Esophagus squamous epithelium (tissue), 5 donors: ENCODE measurements at regions of chr17 and their contacts with region 1.

Region 1: GRCh38 chr17:21511363-21512198 is 135.4 kb downstream of the KCNJ12 start:
- DNase-seq: no peak
- H3K4me3 ChIP-seq: peak overlapping the region; percentile 27 to 64 (median 56)
- H3K27ac ChIP-seq: peak overlapping the region in 3 of 4 donors; percentile 63 to 72 (median 67)
- H3K4me1 ChIP-seq: peaks cover 5 to 21% (median 6%) of the 10 kb centered on the region in 3 donors
- H3K27me3 ChIP-seq: peaks cover 0 to 26% (median 0%) of the 10 kb centered on the region in 4 donors
- CTCF ChIP-seq: peak; percentile 48 to 84 (median 74)
- POLR2A ChIP-seq: no peak

Region 2: GRCh38 chr17:21126645-21127510 is 384.7 kb before region 1 on chr17 and contains the start of gene DHRS7B:
- intact Hi-C with region 1: loop called (anchors 10 kb)
- DNase-seq: peak; percentile 56
- H3K4me3 ChIP-seq: peak within 1 kb of the TSS; percentile 62 to 98 (median 73)
- H3K27ac ChIP-seq: peak within 1 kb of the TSS; percentile 90 to 98 (median 96)
- H3K4me1 ChIP-seq: peaks cover 8 to 49% (median 13%) of the 10 kb centered on the region in 3 donors
- H3K27me3 ChIP-seq: peaks cover 0 to 3% (median 0%) of the 10 kb centered on the region in 4 donors
- CTCF ChIP-seq: peak in 1 of 6 experiments; percentile 6
- POLR2A ChIP-seq: peak in 2 of 4 donors; percentile 69 to 75
- total RNA-seq, gene DHRS7B: 18.8 to 32.4 (median 22.3) TPM

Region 3: DNA sequence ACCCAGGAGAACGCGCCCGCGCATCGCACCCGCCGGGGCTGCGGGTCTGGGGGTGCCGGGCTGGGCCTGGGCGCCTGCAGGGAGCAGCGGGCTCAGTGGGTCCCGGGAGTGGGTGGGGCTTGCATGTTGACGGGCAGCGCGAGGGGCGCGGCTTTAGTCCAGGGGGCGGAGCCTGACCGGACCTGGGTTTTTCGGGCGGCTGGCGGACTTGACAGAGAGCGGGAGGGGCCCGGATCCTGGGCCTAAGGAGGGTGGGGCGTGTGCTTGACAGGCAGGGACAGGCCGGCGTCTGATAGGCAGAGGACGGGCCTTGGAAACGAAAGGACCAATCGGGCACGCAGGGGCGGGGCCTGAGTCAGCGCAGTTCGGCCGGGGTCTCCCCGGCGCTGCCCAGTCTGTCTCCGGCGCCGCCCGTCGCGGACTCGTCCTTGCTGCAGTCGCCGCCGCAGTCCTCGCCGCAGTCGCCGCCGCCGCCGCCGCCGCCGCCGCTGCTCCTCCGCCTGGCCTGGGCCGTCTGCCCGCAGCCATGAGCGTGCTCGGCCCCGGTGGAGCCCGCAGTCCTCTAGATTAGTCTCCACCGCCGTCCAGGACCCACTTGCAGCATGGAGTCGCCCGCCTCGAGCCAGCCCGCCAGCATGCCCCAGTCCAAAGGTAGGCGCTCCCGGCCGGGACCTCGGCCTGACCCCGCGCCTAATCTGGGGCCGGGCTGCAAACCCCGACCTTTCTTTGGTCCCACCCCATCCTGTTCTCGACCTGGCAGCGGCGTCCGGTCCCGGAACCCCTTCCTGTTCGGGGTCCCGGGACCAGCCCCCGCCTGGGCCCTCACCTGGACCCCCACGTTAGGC is 227.0 kb before region 1 on chr17 and contains the start of gene MAP2K3:
- intact Hi-C with region 1: loop called (anchors 5 kb)
- DNase-seq: peak; percentile 98
- H3K4me3 ChIP-seq: peak within 1 kb of the TSS; percentile 65 to 97 (median 88)
- H3K27ac ChIP-seq: peak within 1 kb of the TSS; percentile 90 to 99 (median 97)
- H3K4me1 ChIP-seq: peaks cover 42 to 79% (median 46%) of the 10 kb centered on the region in 3 donors
- H3K27me3 ChIP-seq: no peaks in the 10 kb centered on the region
- CTCF ChIP-seq: peak in 1 of 6 experiments; percentile 11
- POLR2A ChIP-seq: peak in 3 of 4 donors; percentile 64 to 97 (median 93)
- total RNA-seq, gene MAP2K3: 24.1 to 53.6 (median 38.4) TPM

Region 4: GRCh38 chr17:21457051-21458026 is 54.2 kb before region 1 on chr17:
- intact Hi-C with region 1: loop called (anchors 5 kb)
- DNase-seq: peak; percentile 24
- H3K4me3 ChIP-seq: no peak overlapping the region
- H3K27ac ChIP-seq: peak overlapping the region in 2 of 4 donors; percentile 19 to 65
- H3K4me1 ChIP-seq: peaks cover 5 to 21% (median 15%) of the 10 kb centered on the region in 3 donors
- H3K27me3 ChIP-seq: peaks cover 0 to 27% (median 0%) of the 10 kb centered on the region in 4 donors
- CTCF ChIP-seq: peak; percentile 68 to 93 (median 89)
- POLR2A ChIP-seq: no peak

Region 5: DNA sequence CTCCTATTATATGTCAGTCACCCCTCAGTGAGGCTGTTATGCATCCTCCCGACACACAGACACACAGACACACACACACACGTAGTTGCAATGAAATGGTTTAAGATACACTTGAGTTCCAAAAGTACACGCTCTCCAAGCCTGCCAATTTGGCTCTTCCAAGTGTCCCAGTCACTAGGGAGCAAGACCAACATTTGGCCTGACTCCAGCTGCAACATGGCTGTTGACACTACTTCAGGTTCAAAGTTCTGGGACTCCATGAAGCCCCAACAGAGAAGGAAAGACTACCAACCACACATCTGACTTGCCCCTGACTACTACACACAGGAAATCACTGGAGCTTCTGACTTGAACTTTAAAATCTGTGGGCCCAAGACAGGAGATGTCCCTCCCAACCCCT is 52.7 kb after region 1 on chr17:
- intact Hi-C with region 1: no loop called
- DNase-seq: no peak
- H3K4me3 ChIP-seq: no peak overlapping the region
- H3K27ac ChIP-seq: no peak overlapping the region
- H3K4me1 ChIP-seq: no peaks in the 10 kb centered on the region
- H3K27me3 ChIP-seq: peaks cover 0 to 3% (median 0%) of the 10 kb centered on the region in 4 donors
- CTCF ChIP-seq: no peak
- POLR2A ChIP-seq: no peak